HEK293 (cell line): ENCODE measurements at regions of chr10 and their contacts with region 1.

Region 1: GRCh38 chr10:17430647-17431355 is 23.6 kb downstream of the ST8SIA6 start:
- H3K4me3 ChIP-seq: no peak overlapping the region
- H3K27ac ChIP-seq: no peak overlapping the region
- H3K4me1 ChIP-seq: no peaks in the 10 kb centered on the region
- CTCF ChIP-seq: peak; percentile 55

Region 2: DNA sequence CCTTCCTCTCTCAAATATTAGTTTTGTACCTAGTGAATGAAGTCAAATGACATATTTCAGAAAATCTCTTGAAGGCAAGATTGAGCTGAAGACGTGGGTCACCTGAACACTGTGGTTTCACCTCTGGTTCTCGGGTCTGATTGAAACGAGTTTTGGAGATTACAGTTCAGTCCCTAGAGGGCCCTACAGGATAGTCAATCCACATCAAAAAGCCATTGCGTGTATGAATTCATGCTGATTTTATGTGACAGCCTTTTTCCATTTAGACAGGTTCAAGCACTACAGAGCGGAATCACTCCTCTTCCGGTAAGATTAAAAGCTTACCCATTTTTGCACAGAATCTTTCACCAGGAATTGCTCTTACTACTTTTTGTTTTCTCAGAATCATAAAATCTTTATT is 140.6 kb before region 1 on chr10:
- CTCF ChIA-PET with region 1: interaction called, 23 read pairs
- POLR2A ChIA-PET with region 1: no interaction called
- H3K4me3 ChIP-seq: no peak overlapping the region
- H3K27ac ChIP-seq: no peak overlapping the region
- H3K4me1 ChIP-seq: no peaks in the 10 kb centered on the region
- CTCF ChIP-seq: peak; percentile 64

Region 3: GRCh38 chr10:17365402-17365801 is 65.4 kb before region 1 on chr10:
- CTCF ChIA-PET with region 1: no interaction called
- POLR2A ChIA-PET with region 1: no interaction called
- H3K4me3 ChIP-seq: no peak overlapping the region
- H3K27ac ChIP-seq: no peak overlapping the region
- H3K4me1 ChIP-seq: no peaks in the 10 kb centered on the region
- CTCF ChIP-seq: no peak

Region 4: DNA sequence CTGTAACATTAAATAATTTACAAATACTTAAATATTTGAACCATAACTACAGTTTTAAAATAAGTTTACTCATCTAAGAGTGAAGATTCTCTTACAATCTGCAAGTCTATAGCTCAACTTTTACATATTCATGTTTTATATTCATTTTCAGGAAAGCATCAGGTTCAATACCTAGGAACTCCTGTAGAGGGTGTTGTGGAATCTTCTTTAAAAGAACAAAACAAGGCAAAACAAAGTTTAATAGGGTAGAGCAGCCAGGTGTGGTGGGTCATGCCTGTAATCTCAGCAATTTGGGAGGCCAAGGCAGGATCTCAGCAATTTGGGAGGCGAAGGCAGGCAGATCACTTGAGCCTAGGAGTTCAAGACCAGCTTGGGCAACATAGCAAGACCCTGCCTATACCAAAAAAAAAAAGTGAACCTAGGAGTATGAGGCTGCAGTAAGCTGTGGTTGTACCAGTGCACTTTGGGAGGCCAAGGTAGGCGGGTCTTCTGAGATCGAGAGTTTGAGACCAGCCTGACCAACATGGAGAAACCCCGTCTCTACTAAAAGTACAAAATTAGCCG is 21.5 kb before region 1 on chr10:
- CTCF ChIA-PET with region 1: interaction called, 10 read pairs
- POLR2A ChIA-PET with region 1: no interaction called
- H3K4me3 ChIP-seq: no peak overlapping the region
- H3K27ac ChIP-seq: no peak overlapping the region
- H3K4me1 ChIP-seq: no peaks in the 10 kb centered on the region
- CTCF ChIP-seq: no peak

Region 5: DNA sequence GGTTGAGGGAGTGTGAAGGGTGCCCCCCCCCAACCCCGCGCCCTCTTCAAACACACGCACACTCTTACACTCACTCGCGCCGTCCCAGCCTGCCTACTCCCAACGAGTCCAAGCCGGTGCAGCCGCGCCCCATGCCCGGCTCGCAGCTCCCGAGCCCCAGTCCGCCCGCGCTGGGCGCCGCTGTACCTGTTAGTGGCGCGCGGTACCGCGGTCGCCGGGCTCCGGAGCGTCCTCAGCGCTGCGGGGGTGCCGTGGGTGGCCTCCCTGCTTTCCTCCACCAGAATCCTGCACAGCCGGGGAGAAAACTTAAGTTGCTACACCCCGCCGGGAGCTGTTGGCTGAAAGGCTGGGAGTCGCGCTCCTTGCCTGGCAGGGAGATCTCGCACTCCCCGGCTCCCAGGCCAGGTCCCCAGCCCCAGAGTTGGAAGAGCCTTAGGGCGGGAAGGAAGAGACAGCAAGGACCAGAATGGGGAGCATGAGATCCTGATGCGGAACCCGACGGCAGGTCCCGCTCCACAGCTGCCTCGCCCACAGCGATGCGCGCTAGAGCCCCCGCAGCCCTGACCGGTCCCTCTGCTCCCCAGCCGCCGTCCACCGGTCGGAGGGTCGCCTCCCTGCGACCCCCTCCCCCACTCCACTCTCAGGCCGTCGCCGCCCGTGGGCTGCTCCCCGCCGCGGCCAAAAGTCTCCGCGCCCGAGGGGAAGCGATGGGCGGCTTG is 22.7 kb after region 1 on chr10:
- CTCF ChIA-PET with region 1: interaction called, 11 read pairs
- POLR2A ChIA-PET with region 1: no interaction called
- H3K4me3 ChIP-seq: peak overlapping the region; percentile 52
- H3K27ac ChIP-seq: peak overlapping the region; percentile 39; the same call in 1 of the 2 replicates
- H3K4me1 ChIP-seq: no peaks in the 10 kb centered on the region
- CTCF ChIP-seq: no peak